ENCODE measurements at regions of chr19 and their contacts with region 1.

Region 1: GRCh38 chr19:48738557-48739399 is 1.6 kb downstream of the RASIP1 start:
- DNase-seq: peak; percentile 99
- ATAC-seq: peak; percentile 96
- H3K4me3 Mint-ChIP-seq: peak overlapping the region; percentile 51
- H3K27ac Mint-ChIP-seq: peak overlapping the region; percentile 51
- H3K4me1 Mint-ChIP-seq: peaks cover 17% of the 10 kb centered on the region
- H3K27me3 Mint-ChIP-seq: peaks cover 3% of the 10 kb centered on the region

Region 2: GRCh38 chr19:47973529-47973928 is 765.2 kb before region 1 on chr19:
- CTCF ChIA-PET with region 1: no interaction called
- POLR2A ChIA-PET with region 1: no interaction called
- intact Hi-C with region 1: no loop called
- DNase-seq: no peak
- ATAC-seq: no peak
- H3K4me3 Mint-ChIP-seq: no peak overlapping the region
- H3K27ac Mint-ChIP-seq: no peak overlapping the region
- H3K4me1 Mint-ChIP-seq: no peaks in the 10 kb centered on the region
- H3K27me3 Mint-ChIP-seq: peaks cover 39% of the 10 kb centered on the region

Region 3: DNA sequence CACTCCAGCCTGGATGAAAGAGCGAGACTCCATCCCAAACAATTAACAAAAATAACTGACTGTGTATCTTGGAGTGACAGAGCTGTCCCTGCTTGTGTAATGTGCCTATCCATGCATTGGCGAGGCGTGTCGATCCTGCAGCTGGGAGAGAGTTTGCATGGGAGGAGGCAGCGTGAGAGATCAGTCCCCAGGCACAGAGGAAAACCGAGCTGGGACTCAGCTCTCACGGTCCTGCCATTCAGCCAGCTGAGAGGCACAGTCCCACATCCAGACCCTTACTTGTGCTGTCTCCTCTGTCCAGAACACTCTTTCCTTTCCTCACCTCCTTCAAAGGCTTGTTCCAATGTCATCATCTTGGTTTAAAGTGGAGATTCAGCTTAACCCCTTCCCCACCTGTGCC is 198.7 kb before region 1 on chr19:
- CTCF ChIA-PET with region 1: no interaction called
- POLR2A ChIA-PET with region 1: no interaction called
- intact Hi-C with region 1: no loop called
- DNase-seq: no peak
- ATAC-seq: no peak
- H3K4me3 Mint-ChIP-seq: no peak overlapping the region
- H3K27ac Mint-ChIP-seq: no peak overlapping the region
- H3K4me1 Mint-ChIP-seq: no peaks in the 10 kb centered on the region
- H3K27me3 Mint-ChIP-seq: no peaks in the 10 kb centered on the region

Region 4: DNA sequence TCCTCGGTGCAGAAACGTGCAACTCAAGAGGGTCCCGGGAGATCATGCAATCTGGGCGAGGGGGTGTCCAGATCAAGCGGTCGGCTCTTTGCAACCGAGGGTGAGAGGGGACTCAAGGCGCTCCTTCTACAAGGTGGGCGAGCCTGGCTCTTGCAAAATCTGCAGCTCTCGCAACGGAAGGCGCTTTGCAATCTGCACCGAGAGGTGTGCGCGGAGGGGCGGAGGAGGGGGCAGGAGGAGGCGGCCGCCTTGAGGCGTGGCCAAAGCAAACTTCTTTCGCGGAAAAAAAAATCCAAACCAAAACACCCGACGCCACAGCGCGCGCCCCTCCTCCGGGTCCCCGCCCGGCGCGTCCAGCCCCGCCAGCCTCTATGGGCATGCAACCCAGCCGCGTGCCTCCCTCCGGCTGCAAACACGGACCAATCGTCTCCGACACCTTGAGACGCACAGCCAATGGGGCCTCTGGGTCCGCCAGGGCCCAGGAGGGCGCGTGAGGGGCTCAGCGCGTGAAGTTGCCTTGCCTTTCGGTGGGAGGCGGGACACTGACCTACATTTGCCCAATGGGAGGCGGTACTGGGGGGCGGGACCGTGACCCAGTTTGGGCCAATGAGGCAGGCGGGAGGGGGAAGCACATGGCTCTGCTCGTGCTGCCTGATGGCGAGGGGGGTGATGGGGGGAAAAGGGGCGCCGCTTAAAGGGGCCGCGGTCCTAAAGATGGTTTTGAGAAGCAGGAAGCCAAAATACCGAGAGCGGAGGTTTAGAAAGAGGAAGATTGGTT is 101.4 kb before region 1 on chr19 and contains the start of gene DBP:
- CTCF ChIA-PET with region 1: no interaction called
- POLR2A ChIA-PET with region 1: no interaction called
- intact Hi-C with region 1: loop called in 1 of 2 experiments (anchors 1 kb)
- DNase-seq: peak; percentile 98
- ATAC-seq: peak; percentile 75
- H3K4me3 Mint-ChIP-seq: peak within 1 kb of the TSS; percentile 83
- H3K27ac Mint-ChIP-seq: peak within 1 kb of the TSS; percentile 99
- H3K4me1 Mint-ChIP-seq: peaks cover 55% of the 10 kb centered on the region
- H3K27me3 Mint-ChIP-seq: no peaks in the 10 kb centered on the region
- total RNA-seq, gene DBP: 8.3 to 12.4 TPM

Region 5: GRCh38 chr19:48660854-48661731 is 77.7 kb before region 1 on chr19:
- CTCF ChIA-PET with region 1: no interaction called
- POLR2A ChIA-PET with region 1: no interaction called
- intact Hi-C with region 1: loop called in 1 of 2 experiments (anchors 5 kb)
- DNase-seq: peak; percentile 88
- ATAC-seq: peak; percentile 94
- H3K4me3 Mint-ChIP-seq: peak overlapping the region; percentile 10
- H3K27ac Mint-ChIP-seq: peak overlapping the region; percentile 94
- H3K4me1 Mint-ChIP-seq: peaks cover 7% of the 10 kb centered on the region
- H3K27me3 Mint-ChIP-seq: no peaks in the 10 kb centered on the region

Region 6: GRCh38 chr19:48812094-48812929 is 73.5 kb after region 1 on chr19:
- CTCF ChIA-PET with region 1: no interaction called
- POLR2A ChIA-PET with region 1: no interaction called
- intact Hi-C with region 1: loop called in 1 of 2 experiments (anchors 2 kb)
- DNase-seq: peak; percentile 78
- ATAC-seq: peak; percentile 40
- H3K4me3 Mint-ChIP-seq: peak overlapping the region; percentile 85
- H3K27ac Mint-ChIP-seq: peak overlapping the region; percentile 37
- H3K4me1 Mint-ChIP-seq: peaks cover 29% of the 10 kb centered on the region
- H3K27me3 Mint-ChIP-seq: no peaks in the 10 kb centered on the region

Region 7: DNA sequence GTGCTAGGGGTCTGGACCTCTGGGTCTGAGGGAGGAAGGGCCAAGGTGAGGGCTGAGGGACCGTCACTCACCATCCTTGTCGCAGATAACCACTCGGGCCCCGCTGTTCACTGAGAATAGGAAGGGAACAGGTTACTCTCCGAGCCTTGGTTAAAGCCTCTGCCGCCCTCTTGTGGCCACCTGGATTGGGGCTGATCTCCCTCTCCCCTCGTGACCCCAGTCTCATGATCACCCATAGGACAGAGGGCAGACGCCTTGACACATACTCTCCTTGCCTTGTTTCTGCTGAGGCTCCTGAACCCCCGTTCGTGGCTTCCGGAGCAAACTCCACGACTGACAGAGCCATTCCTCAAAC is 96.9 kb after region 1 on chr19:
- CTCF ChIA-PET with region 1: no interaction called
- POLR2A ChIA-PET with region 1: no interaction called
- intact Hi-C with region 1: no loop called
- DNase-seq: peak; percentile 98
- ATAC-seq: peak; percentile 99
- H3K4me3 Mint-ChIP-seq: peak overlapping the region; percentile 71
- H3K27ac Mint-ChIP-seq: peak overlapping the region; percentile 83
- H3K4me1 Mint-ChIP-seq: peaks cover 18% of the 10 kb centered on the region
- H3K27me3 Mint-ChIP-seq: no peaks in the 10 kb centered on the region

Region 8: DNA sequence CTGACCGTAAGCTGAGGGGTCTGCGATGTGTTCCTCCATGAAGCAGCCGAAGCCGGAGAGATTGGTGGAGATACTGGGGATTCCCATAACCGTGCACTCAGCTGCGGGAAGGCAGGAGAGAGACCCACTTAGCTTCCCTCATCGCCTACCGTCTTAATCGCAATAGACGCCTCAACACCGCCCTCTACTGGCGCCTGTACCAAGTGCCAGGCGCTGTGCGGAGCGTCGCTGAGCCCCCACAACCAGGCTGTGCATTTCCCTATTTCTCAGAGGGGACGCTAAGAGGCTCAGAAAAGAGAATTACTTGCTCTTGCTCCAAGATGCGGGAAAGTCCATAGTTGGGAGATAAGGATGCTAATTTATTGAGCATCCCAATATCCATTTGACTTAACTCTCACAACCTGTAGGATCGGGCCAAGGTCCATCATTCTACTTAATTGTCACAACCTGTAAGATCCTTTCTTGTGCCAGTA is 232.2 kb after region 1 on chr19:
- CTCF ChIA-PET with region 1: no interaction called
- POLR2A ChIA-PET with region 1: no interaction called
- intact Hi-C with region 1: no loop called
- DNase-seq: peak; percentile 91
- ATAC-seq: peak; percentile 84
- H3K4me3 Mint-ChIP-seq: no peak overlapping the region
- H3K27ac Mint-ChIP-seq: no peak overlapping the region
- H3K4me1 Mint-ChIP-seq: peaks cover 17% of the 10 kb centered on the region
- H3K27me3 Mint-ChIP-seq: no peaks in the 10 kb centered on the region

Measured in activated CD4-positive, alpha-beta T cell treated with anti-CD3 and anti-CD28 coated beads for 36 hours (primary cell).